ENCODE measurements at regions of chr2 and their contacts with region 1.

Region 1: GRCh38 chr2:99417396-99417795 is 72.4 kb downstream of the REV1 start:
- DNase-seq: no peak
- H3K4me3 ChIP-seq: no peak overlapping the region
- H3K27ac ChIP-seq: no peak overlapping the region
- H3K4me1 ChIP-seq: no peaks in the 10 kb centered on the region
- H3K27me3 ChIP-seq: no peaks in the 10 kb centered on the region
- CTCF ChIP-seq: no peak
- EP300 ChIP-seq: no peak
- POLR2A ChIP-seq: no peak

Region 2: GRCh38 chr2:98465456-98466226 is 951.8 kb before region 1 on chr2:
- in situ Hi-C with region 1: no loop called
- intact Hi-C with region 1: no loop called
- DNase-seq: peak; percentile 90
- H3K4me3 ChIP-seq: no peak overlapping the region
- H3K27ac ChIP-seq: peak overlapping the region; percentile 72 to 84 (median 76)
- H3K4me1 ChIP-seq: peaks cover 19 to 53% (median 30%) of the 10 kb centered on the region in 4 donors
- H3K27me3 ChIP-seq: no peaks in the 10 kb centered on the region
- CTCF ChIP-seq: no peak
- EP300 ChIP-seq: no peak
- POLR2A ChIP-seq: no peak

Region 3: GRCh38 chr2:98588880-98589431 is 828.4 kb before region 1 on chr2:
- in situ Hi-C with region 1: no loop called
- intact Hi-C with region 1: no loop called
- DNase-seq: no peak
- H3K4me3 ChIP-seq: no peak overlapping the region
- H3K27ac ChIP-seq: no peak overlapping the region
- H3K4me1 ChIP-seq: peaks cover 0 to 8% (median 6%) of the 10 kb centered on the region in 4 donors
- H3K27me3 ChIP-seq: no peaks in the 10 kb centered on the region
- CTCF ChIP-seq: no peak
- EP300 ChIP-seq: no peak
- POLR2A ChIP-seq: no peak

Region 4: GRCh38 chr2:99389371-99389770 is 28.0 kb before region 1 on chr2:
- in situ Hi-C with region 1: no loop called
- intact Hi-C with region 1: no loop called
- DNase-seq: no peak
- H3K4me3 ChIP-seq: no peak overlapping the region
- H3K27ac ChIP-seq: no peak overlapping the region
- H3K4me1 ChIP-seq: peaks cover 0 to 10% (median 5%) of the 10 kb centered on the region in 4 donors
- H3K27me3 ChIP-seq: no peaks in the 10 kb centered on the region
- CTCF ChIP-seq: no peak
- EP300 ChIP-seq: no peak
- POLR2A ChIP-seq: no peak

Region 5: DNA sequence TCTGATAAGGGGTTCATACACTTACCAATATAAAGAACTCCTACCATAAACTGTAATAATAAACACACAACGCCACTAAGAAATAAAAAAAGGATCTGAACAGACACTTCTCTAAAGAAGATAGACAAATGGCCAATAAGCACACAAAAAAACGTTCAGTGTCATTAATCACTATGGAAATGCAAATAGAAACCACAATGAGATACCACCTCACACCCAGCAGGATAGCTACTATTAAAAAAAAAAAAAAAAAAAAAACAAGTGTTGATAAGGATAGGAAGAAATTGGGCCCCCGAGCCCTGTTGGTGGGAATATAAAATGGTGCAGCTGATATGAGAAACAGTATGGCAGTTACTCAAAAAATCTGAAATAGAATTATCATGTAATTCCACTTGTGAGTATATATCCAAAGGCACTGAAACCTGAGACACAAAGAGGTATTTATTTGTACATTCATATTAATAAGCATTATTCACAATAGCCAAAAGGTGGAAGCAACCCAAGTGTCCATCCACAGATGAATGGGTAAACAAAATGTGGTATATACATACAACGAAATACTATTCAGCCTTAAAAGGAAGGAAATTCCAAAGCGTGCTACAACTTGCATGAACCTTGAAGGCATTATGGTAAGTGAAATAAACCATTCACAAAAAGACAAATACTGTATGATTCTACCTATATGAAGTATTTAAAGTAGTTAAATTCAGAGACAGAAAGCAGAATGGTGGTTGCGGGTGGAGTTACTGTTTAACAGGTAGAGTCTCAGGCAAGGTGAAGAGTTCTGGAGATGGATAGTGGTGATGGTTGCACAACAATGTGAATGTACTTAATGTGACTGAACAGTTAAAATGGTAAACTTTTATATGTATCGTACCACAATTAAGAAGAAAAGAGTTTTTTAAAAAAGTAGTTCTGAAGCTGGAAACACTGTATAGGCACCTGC is 54.5 kb after region 1 on chr2:
- in situ Hi-C with region 1: no loop called
- intact Hi-C with region 1: no loop called
- DNase-seq: no peak
- H3K4me3 ChIP-seq: no peak overlapping the region
- H3K27ac ChIP-seq: peak overlapping the region in 1 of 4 donors; percentile 12
- H3K4me1 ChIP-seq: peaks cover 6 to 45% (median 27%) of the 10 kb centered on the region in 4 donors
- H3K27me3 ChIP-seq: no peaks in the 10 kb centered on the region
- CTCF ChIP-seq: no peak
- EP300 ChIP-seq: no peak
- POLR2A ChIP-seq: no peak

Region 6: GRCh38 chr2:100509066-100509465 is 1091.7 kb after region 1 on chr2:
- in situ Hi-C with region 1: no loop called
- intact Hi-C with region 1: loop called (anchors 5 kb)
- DNase-seq: no peak
- H3K4me3 ChIP-seq: no peak overlapping the region
- H3K27ac ChIP-seq: no peak overlapping the region
- H3K4me1 ChIP-seq: no peaks in the 10 kb centered on the region
- H3K27me3 ChIP-seq: no peaks in the 10 kb centered on the region
- CTCF ChIP-seq: no peak
- EP300 ChIP-seq: no peak
- POLR2A ChIP-seq: no peak

Measured in transverse colon (tissue), 4 donors.